PC-3 (cell line): ENCODE measurements at regions of chr14 and their contacts with region 1.

Region 1: DNA sequence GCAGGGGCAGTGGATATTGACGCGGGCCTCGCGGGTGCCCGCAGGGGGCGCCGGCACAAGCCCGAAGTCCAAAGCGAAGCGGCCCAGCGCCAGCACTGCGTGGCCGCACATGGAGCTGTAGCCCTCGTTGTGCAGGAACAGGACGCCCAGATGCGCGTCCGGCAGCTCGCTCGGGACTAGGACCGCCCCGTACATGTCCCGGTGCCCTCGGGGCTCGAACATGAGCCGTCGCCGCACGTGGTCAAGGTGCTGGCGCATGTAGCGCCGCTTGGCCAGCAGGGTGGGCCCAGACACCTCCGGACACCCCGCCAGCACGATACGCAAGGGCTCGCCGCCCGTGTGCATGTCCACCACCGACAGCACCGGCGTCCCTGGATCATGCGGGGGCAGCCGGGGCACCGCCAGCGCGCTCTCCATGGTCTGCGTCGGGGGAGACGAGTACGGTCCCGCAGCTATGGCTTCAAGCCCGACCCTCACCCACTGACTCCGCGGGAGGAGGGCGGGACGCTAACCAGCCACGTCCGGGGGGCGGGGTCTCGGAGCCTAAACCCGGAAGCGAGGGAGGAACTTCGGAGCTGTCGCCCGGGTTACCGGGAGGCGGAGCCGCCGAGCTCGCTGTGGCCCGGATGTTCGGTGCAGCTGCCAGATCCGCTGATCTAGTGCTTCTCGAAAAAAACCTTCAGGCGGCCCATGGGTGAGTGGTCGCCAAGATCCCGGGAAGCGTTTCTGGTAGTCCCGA is at the starts of genes JKAMP and L3HYPDH:
- DNase-seq: peak; percentile 100
- ATAC-seq: peak; percentile 75
- H3K4me3 ChIP-seq: peak within 1 kb of the TSS; percentile 79
- H3K27ac ChIP-seq: peak within 1 kb of the TSS; percentile 83
- H3K4me1 ChIP-seq: peaks cover 42% of the 10 kb centered on the region
- H3K27me3 ChIP-seq: no peaks in the 10 kb centered on the region
- CTCF ChIP-seq: peak; percentile 92
- total RNA-seq, gene JKAMP: 130 and 147 TPM in 2 replicates
- total RNA-seq, gene L3HYPDH: 108 and 117 TPM in 2 replicates

Region 2: GRCh38 chr14:58244556-58245387 is 1239.3 kb before region 1 on chr14 and contains the start of gene PSMA3:
- CTCF ChIA-PET with region 1: no interaction called
- POLR2A ChIA-PET with region 1: no interaction called
- intact Hi-C with region 1: loop called (anchors 10 kb)
- DNase-seq: peak; percentile 100
- ATAC-seq: peak; percentile 87
- H3K4me3 ChIP-seq: peak within 1 kb of the TSS; percentile 76
- H3K27ac ChIP-seq: peak within 1 kb of the TSS; percentile 87
- H3K4me1 ChIP-seq: peaks cover 25% of the 10 kb centered on the region
- H3K27me3 ChIP-seq: no peaks in the 10 kb centered on the region
- CTCF ChIP-seq: no peak
- total RNA-seq, gene PSMA3: 669 and 700 TPM in 2 replicates

Region 3: GRCh38 chr14:59275653-59276052 is 208.4 kb before region 1 on chr14:
- CTCF ChIA-PET with region 1: no interaction called
- POLR2A ChIA-PET with region 1: no interaction called
- intact Hi-C with region 1: loop called (anchors 5 kb)
- DNase-seq: peak; percentile 100
- ATAC-seq: peak; percentile 75
- H3K4me3 ChIP-seq: peak overlapping the region; percentile 23
- H3K27ac ChIP-seq: peak overlapping the region; percentile 64
- H3K4me1 ChIP-seq: peaks cover 60% of the 10 kb centered on the region
- H3K27me3 ChIP-seq: no peaks in the 10 kb centered on the region
- CTCF ChIP-seq: no peak

Region 4: GRCh38 chr14:59464486-59465315 is 19.4 kb before region 1 on chr14:
- CTCF ChIA-PET with region 1: interaction called, 3 read pairs
- POLR2A ChIA-PET with region 1: interaction called, 3 read pairs
- intact Hi-C with region 1: loop called (anchors 1 kb)
- DNase-seq: peak; percentile 87
- ATAC-seq: peak; percentile 82
- H3K4me3 ChIP-seq: peak overlapping the region; percentile 72
- H3K27ac ChIP-seq: no peak overlapping the region
- H3K4me1 ChIP-seq: peaks cover 9% of the 10 kb centered on the region
- H3K27me3 ChIP-seq: no peaks in the 10 kb centered on the region
- CTCF ChIP-seq: no peak

Region 5: DNA sequence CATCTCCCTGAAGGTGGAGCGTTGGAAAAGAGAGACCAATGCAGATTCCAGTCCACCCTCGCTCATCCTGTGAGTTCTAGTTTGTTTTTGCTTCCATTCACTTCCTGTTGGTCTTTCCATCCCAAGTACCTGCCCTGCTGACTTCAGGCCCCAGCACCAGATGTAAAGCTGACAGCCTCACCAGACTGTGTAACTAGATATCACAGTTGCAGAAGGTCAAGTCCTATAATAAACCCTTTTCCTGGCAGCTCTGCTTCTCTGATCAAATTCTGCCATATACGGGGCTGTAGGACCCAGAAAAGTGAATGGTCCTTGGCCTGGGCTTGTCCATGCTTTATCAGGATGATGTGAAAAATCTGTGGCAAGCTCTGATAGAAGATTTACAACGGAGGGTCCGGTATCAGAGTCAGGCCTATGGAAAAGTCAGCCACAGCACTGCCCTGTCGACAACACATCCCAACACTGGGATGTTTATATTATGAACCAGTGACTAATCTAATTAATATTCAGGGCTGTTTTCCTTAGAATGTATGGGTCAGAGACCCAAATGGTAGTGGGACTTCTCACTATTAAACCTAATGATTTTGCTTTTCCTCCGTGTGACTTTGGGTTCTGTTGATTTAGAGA is 50.4 kb after region 1 on chr14:
- CTCF ChIA-PET with region 1: no interaction called
- POLR2A ChIA-PET with region 1: no interaction called
- intact Hi-C with region 1: no loop called
- DNase-seq: no peak
- ATAC-seq: no peak
- H3K4me3 ChIP-seq: no peak overlapping the region
- H3K27ac ChIP-seq: no peak overlapping the region
- H3K4me1 ChIP-seq: no peaks in the 10 kb centered on the region
- H3K27me3 ChIP-seq: peaks cover 75% of the 10 kb centered on the region
- CTCF ChIP-seq: no peak

Region 6: GRCh38 chr14:59890676-59891075 is 406.6 kb after region 1 on chr14:
- CTCF ChIA-PET with region 1: no interaction called
- POLR2A ChIA-PET with region 1: no interaction called
- intact Hi-C with region 1: no loop called
- DNase-seq: no peak
- ATAC-seq: no peak
- H3K4me3 ChIP-seq: no peak overlapping the region
- H3K27ac ChIP-seq: no peak overlapping the region
- H3K4me1 ChIP-seq: no peaks in the 10 kb centered on the region
- H3K27me3 ChIP-seq: peaks cover 44% of the 10 kb centered on the region; the same call in 1 of the 2 replicates
- CTCF ChIP-seq: no peak